ENCODE measurements at regions of chr5 and their contacts with region 1.

Region 1: DNA sequence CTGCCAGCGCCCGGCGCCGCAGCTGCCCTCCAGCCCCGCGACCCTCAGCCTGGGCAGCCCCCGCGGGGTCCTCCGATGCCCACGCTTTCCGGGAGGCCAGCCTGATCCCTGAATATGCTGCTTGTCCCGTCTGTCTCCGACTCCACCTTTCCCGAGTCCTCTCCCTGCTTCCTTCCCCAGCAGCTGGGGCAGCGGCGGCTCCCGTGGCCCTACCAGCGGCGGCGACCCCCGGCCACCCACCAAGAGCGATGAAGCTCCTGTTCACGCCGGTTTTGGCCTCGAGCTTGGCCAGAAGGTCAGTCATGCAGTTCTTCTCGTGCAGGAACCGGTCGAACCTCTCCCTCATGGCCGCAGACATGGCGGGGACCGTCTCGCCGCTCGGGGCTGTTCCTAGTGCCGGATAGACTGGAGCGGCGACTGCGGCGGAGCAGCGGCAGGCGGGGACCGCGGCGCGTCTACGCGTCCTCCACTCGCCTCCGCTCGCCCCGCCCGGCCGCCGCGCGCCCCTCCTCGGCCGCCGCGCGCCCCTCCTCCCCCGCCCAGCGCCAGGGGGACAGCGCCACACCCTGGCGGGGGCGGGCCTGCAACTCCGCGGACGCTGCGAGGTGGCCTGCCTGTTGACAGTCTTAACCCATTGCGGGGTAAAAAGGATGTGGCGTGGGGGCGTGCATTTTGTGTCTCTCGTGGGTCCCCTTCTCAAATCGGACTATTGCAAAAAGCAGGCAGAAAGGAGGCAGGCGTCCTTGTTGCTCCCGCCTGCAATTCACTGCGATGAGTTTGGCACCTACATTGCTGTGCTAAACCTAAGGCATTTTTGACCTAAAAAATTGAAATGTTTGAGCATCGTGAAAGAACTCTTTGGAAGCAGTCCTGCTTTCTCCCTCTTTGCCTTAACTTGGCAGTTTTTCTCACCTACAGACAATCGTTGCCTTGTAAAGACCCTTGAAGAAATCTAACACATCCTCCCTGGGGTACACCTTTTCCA is at the start of gene REEP5:
- DNase-seq: no peak
- H3K4me3 ChIP-seq: peak within 1 kb of the TSS; percentile 94
- H3K27ac ChIP-seq: peak within 1 kb of the TSS; percentile 77
- H3K27me3 ChIP-seq: no peaks in the 10 kb centered on the region
- CTCF ChIP-seq: peak; percentile 62
- polyA plus RNA-seq, gene REEP5: 163 and 176 TPM in 2 replicates

Region 2: DNA sequence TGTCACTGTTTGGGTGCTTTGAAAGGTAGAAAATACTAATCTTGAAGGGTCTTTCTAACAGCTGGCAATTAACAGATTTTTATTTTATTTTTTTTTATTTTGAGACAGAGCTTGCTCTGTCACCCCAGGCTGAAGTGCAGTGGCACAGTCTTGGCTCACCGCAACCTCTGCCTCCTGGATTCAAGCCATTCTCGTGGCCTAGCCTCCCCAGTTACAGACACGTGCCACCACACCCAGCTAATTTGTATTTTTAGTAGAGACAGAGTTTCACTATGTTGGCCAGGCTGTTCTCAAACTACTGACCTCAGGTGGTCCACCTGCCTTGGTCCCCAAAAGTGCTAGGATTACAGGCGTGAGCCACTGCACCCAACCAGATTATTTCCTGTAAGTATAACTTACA is 197.2 kb before region 1 on chr5:
- CTCF ChIA-PET with region 1: no interaction called
- POLR2A ChIA-PET with region 1: no interaction called
- DNase-seq: no peak
- H3K4me3 ChIP-seq: no peak overlapping the region
- H3K27ac ChIP-seq: no peak overlapping the region
- H3K27me3 ChIP-seq: no peaks in the 10 kb centered on the region
- CTCF ChIP-seq: no peak

Region 3: DNA sequence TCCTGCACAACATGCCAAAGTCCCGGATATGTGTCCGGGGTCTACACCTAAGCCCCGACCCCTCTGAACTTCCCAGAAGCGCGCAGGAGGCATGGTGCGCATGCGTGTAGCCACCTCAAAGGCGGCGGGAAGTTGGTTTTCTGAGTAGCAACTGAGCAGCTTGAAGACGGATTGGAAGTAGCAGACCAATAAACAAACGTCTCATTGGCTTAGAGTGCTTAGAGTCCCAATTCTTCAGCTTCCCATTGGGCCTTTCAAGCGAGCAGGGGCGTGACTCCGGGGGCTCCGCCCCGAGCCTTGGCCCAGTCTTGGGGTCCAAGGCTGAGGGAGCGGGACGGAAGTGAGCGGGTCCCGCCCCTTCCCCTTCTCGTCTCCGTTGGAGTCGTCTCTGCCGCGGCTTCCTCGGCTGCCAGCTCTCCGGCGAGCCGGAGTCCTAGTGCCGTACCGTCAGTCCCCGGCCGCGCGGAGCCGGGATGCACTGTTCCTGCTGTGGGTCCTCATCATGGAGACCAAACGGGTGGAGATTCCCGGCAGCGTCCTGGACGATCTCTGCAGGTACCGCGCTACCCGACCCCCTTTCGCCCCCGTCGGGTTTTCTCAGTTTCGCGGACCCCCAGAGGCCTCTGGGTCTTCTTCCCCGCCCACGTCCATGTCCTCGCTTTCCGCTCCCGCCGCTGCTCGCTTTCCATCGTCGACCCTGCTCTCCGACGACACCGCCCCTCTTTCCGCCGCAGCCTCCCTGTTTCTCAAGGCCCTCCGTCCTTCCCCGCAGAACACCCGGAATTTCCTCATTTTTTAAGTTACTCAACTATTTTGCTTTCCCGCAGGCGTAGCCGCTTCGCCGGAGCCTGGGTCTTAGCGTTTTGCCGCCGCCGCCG is 54.5 kb after region 1 on chr5 and contains the start of gene DCP2:
- CTCF ChIA-PET with region 1: no interaction called
- POLR2A ChIA-PET with region 1: interaction called, 12 read pairs
- DNase-seq: peak; percentile 97
- H3K4me3 ChIP-seq: peak within 1 kb of the TSS; percentile 95
- H3K27ac ChIP-seq: peak within 1 kb of the TSS; percentile 94
- H3K27me3 ChIP-seq: no peaks in the 10 kb centered on the region
- CTCF ChIP-seq: no peak
- polyA plus RNA-seq, gene DCP2: 12.9 and 18.4 TPM in 2 replicates

Region 4: GRCh38 chr5:113404269-113404668 is 482.1 kb after region 1 on chr5:
- CTCF ChIA-PET with region 1: no interaction called
- POLR2A ChIA-PET with region 1: no interaction called
- DNase-seq: no peak
- H3K4me3 ChIP-seq: no peak overlapping the region
- H3K27ac ChIP-seq: no peak overlapping the region
- H3K27me3 ChIP-seq: peaks cover 6% of the 10 kb centered on the region
- CTCF ChIP-seq: no peak

Measured in AG04450 (cell line).